Pancreas (tissue), 10 donors: ENCODE measurements at regions of chr6 and their contacts with region 1.

Region 1: GRCh38 chr6:105087571-105088211 is 92.1 kb downstream of the POPDC3 start:
- DNase-seq: peak in 2 of 6 donors; percentile 31 to 39
- ATAC-seq: peak in 3 of 4 donors; percentile 83 to 92 (median 84)
- H3K4me3 ChIP-seq: no peak overlapping the region
- H3K27ac ChIP-seq: no peak overlapping the region
- H3K4me1 ChIP-seq: no peaks in the 10 kb centered on the region
- H3K27me3 ChIP-seq: no peaks in the 10 kb centered on the region
- CTCF ChIP-seq: peak; percentile 63 to 71 (median 70)

Region 2: DNA sequence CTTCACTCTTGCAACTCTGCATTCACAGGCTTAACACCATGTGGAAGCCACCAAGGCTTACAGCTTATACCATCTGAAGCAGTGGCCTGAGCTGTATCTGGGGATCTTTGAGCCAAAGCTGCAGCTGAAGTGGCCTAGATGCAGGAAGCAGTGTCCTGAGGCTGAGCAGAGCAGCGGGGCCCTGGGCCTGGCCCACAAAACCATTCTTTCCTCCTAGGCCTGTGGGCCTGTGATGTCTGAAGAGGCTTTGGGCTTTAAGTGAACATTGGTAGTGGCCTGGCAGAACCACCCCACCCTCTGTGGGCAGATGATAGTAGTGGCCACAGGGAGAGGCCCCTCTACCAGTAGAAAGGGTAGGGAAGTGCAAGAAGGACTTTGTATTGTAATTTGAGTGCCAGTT is 322.0 kb after region 1 on chr6:
- intact Hi-C with region 1: loop called in 2 of 3 experiments (anchors 5 to 10 kb)
- DNase-seq: no peak
- ATAC-seq: no peak
- H3K4me3 ChIP-seq: no peak overlapping the region
- H3K27ac ChIP-seq: no peak overlapping the region
- H3K4me1 ChIP-seq: no peaks in the 10 kb centered on the region
- H3K27me3 ChIP-seq: no peaks in the 10 kb centered on the region
- CTCF ChIP-seq: no peak